ENCODE measurements at regions of chr19 and their contacts with region 1.

Region 1: GRCh38 chr19:38778733-38779132 is 5.4 kb upstream of the LGALS7 start:
- DNase-seq: no peak
- ATAC-seq: no peak
- H3K4me3 ChIP-seq: no peak overlapping the region
- H3K27ac ChIP-seq: no peak overlapping the region
- H3K4me1 ChIP-seq: no peaks in the 10 kb centered on the region
- H3K27me3 ChIP-seq: peaks cover 0 to 11% (median 4%) of the 10 kb centered on the region in 7 donors
- CTCF ChIP-seq: no peak

Region 2: DNA sequence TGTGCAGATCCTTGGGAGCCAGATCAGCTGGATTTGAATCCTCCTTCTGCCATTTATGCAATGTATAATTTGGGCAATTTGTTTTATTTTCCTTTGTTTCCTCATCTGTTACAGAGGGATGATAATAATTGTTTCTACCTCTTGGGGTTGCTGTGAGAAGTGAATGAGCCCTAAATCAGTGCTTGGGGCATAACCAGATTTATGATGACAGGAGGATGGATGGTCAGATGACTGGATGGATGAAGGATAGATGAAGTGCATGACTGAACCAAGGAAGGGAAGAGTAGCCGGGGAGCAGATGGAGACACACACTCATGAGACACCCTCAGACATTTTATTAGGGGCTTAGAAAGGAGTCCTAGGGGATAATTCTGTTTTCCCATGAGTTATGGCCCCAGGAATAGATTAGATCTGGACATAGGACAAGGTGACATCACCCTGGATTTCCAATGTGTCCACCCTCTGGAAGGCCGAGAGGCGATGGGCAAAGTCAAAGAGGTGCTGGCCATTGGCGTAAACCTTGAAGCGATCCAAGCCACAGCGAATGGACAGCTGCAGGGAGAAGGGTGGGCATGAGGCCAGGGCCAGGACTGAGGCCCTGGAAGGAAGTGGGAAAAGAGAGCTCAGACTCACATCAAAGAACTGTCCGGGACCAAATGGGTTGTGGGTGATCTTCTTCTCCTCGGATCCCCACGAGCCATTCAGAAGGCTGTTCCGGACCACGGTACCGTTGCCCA is 22.8 kb after region 1 on chr19:
- intact Hi-C with region 1: loop called in 1 of 10 experiments (anchors 2 kb)
- DNase-seq: no peak
- ATAC-seq: no peak
- H3K4me3 ChIP-seq: no peak overlapping the region
- H3K27ac ChIP-seq: no peak overlapping the region
- H3K4me1 ChIP-seq: peaks cover 0 to 10% (median 0%) of the 10 kb centered on the region in 9 donors
- H3K27me3 ChIP-seq: no peaks in the 10 kb centered on the region
- CTCF ChIP-seq: no peak